Caco-2 (cell line): ENCODE measurements at regions of chrX and their contacts with region 1.

Region 1: GRCh38 chrX:51892921-51893745 is at the start of gene MAGED1:
- DNase-seq: peak; percentile 93 to 96
- H3K4me3 ChIP-seq: peak within 1 kb of the TSS; percentile 70
- H3K4me3 Mint-ChIP-seq: peak within 1 kb of the TSS; percentile 87
- H3K27ac Mint-ChIP-seq: peak within 1 kb of the TSS; percentile 94
- H3K4me1 ChIP-seq: no peaks in the 10 kb centered on the region
- H3K4me1 Mint-ChIP-seq: peaks cover 6% of the 10 kb centered on the region
- H3K27me3 ChIP-seq: no peaks in the 10 kb centered on the region
- H3K27me3 Mint-ChIP-seq: no peaks in the 10 kb centered on the region
- CTCF ChIP-seq: no peak
- total RNA-seq, gene MAGED1: 163 and 174 TPM in 2 replicates

Region 2: GRCh38 chrX:51834076-51834475 is 59.1 kb before region 1 on chrX:
- CTCF ChIA-PET with region 1: no interaction called
- POLR2A ChIA-PET with region 1: no interaction called
- intact Hi-C with region 1: loop called (anchors 1 kb)
- DNase-seq: peak; percentile 54 to 68
- H3K4me3 ChIP-seq: peak overlapping the region; percentile 21
- H3K4me3 Mint-ChIP-seq: peak overlapping the region; percentile 59
- H3K27ac Mint-ChIP-seq: peak overlapping the region; percentile 42
- H3K4me1 ChIP-seq: peaks cover 23% of the 10 kb centered on the region
- H3K4me1 Mint-ChIP-seq: peaks cover 12% of the 10 kb centered on the region
- H3K27me3 ChIP-seq: no peaks in the 10 kb centered on the region
- H3K27me3 Mint-ChIP-seq: no peaks in the 10 kb centered on the region
- CTCF ChIP-seq: no peak

Region 3: DNA sequence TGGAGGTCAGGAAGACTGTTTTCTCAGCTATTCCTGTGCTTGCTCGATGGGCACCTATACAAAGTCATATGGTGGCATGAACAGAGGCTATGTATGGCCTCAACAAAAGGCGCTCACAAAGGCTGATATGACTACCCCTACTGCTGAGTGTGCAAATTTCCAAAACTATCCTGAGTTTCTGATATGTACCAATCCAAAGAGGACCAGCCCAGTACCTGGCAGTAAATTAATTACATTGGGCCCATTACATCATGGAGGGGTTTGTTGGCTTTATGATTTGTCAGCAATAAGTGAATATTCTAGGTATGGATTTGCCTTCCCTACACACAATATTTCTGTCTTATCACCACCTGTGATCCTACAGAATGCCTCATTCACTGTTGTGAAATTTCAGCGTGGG is 12.6 kb after region 1 on chrX:
- CTCF ChIA-PET with region 1: no interaction called
- POLR2A ChIA-PET with region 1: no interaction called
- intact Hi-C with region 1: no loop called
- DNase-seq: no peak
- H3K4me3 ChIP-seq: no peak overlapping the region
- H3K4me3 Mint-ChIP-seq: no peak overlapping the region
- H3K27ac Mint-ChIP-seq: no peak overlapping the region
- H3K4me1 ChIP-seq: no peaks in the 10 kb centered on the region
- H3K4me1 Mint-ChIP-seq: no peaks in the 10 kb centered on the region
- H3K27me3 ChIP-seq: no peaks in the 10 kb centered on the region
- H3K27me3 Mint-ChIP-seq: no peaks in the 10 kb centered on the region
- CTCF ChIP-seq: no peak

Region 4: DNA sequence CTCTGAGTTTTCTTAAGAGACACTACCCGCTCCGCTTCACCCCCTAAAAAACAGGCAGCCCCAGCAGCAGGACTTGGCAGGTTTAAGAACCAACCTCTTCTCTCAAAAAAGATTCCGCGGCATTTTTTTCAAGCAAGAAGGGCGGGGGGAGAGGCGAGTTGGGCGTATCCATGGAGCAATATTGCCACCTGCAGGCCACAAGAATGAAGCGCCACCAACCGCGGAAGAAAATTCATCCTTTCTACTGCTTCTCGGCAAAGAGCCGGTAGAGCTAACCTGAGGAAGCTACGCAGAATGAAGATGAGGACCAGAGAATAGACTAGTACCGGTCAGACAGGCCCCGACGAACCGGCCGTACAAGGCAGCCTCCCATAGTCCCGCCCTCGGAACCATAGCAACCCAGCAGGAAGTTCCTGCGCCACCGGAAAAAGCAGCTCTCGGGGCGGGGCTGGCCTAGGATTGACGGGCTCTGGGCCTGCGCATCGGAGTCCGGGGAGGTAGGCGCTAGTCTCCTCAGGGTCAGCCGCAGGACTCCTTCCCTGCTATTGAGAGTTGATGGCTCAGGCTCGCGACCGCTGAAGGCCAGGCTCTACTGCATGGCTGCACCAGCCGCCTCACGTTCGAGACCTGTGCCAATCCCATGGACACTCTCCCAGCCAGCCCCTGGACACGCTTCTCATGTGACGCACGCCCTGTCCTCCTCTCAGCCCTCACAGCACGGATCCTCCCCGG is 368.5 kb after region 1 on chrX:
- CTCF ChIA-PET with region 1: no interaction called
- POLR2A ChIA-PET with region 1: no interaction called
- intact Hi-C with region 1: loop called (anchors 1 kb)
- DNase-seq: peak; percentile 86 to 90
- H3K4me3 ChIP-seq: peak overlapping the region; percentile 63
- H3K4me3 Mint-ChIP-seq: peak overlapping the region; percentile 88
- H3K27ac Mint-ChIP-seq: peak overlapping the region; percentile 90
- H3K4me1 ChIP-seq: peaks cover 18% of the 10 kb centered on the region
- H3K4me1 Mint-ChIP-seq: peaks cover 7% of the 10 kb centered on the region
- H3K27me3 ChIP-seq: no peaks in the 10 kb centered on the region
- H3K27me3 Mint-ChIP-seq: peaks cover 3% of the 10 kb centered on the region
- CTCF ChIP-seq: peak; percentile 68 to 87